MCF 10A (cell line): ENCODE measurements at regions of chr6 and their contacts with region 1.

Region 1: GRCh38 chr6:89080542-89081422 is at the start of gene PNRC1:
- DNase-seq: peak; percentile 99
- H3K4me3 Mint-ChIP-seq: peak within 1 kb of the TSS; percentile 96
- H3K27ac Mint-ChIP-seq: peak within 1 kb of the TSS; percentile 92
- H3K4me1 Mint-ChIP-seq: peaks cover 19% of the 10 kb centered on the region
- H3K27me3 Mint-ChIP-seq: no peaks in the 10 kb centered on the region
- CTCF ChIP-seq: no peak
- total RNA-seq, gene PNRC1: 158 and 183 TPM in 2 replicates

Region 2: DNA sequence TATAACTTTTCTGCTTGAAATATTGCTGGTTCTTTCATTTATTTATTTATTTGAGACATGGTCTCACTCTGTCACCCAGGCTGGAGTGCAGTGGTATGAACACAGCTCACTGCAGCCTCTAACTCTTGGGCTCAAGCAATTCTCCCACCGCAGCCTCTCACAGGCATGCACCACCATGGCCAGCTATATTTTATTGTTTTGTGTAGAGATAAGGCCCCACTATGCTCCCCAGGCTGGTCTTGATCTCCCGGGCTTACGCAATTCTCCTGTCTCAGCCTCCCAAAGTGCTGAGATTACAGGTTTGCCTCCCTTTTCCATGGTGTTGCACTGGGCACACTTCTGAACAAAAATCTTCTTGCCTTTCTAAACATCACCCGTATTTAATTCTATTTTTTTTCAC is 78.3 kb before region 1 on chr6:
- CTCF ChIA-PET with region 1: no interaction called
- POLR2A ChIA-PET with region 1: interaction called, 10 read pairs
- intact Hi-C with region 1: no loop called
- DNase-seq: no peak
- H3K4me3 Mint-ChIP-seq: no peak overlapping the region
- H3K27ac Mint-ChIP-seq: no peak overlapping the region
- H3K4me1 Mint-ChIP-seq: peaks cover 3% of the 10 kb centered on the region
- H3K27me3 Mint-ChIP-seq: no peaks in the 10 kb centered on the region
- CTCF ChIP-seq: no peak

Region 3: GRCh38 chr6:89022798-89023197 is 58.0 kb before region 1 on chr6:
- CTCF ChIA-PET with region 1: interaction called, 4 read pairs
- POLR2A ChIA-PET with region 1: interaction called, 36 read pairs
- intact Hi-C with region 1: no loop called
- DNase-seq: peak; percentile 40
- H3K4me3 Mint-ChIP-seq: no peak overlapping the region
- H3K27ac Mint-ChIP-seq: no peak overlapping the region
- H3K4me1 Mint-ChIP-seq: peaks cover 24% of the 10 kb centered on the region
- H3K27me3 Mint-ChIP-seq: no peaks in the 10 kb centered on the region
- CTCF ChIP-seq: no peak

Region 4: DNA sequence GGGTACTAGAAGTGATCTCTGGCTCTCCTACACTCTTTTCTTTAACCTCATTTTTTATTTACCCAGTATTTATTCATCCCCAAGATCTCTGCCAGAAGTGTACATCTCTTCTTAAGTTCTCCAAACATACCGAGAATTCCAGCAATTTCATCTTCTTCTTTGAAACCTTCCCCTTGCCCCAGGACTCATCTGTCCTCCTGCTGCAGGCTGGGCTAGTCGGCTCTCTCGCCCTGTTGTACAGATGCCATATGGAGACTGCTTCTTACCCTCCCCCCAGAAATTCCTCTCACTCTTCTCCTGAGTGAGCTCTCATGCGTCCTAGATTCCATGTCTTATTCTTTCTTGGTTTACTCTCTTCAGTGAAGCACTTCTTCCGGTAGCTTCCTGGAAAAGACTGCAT is 22.2 kb before region 1 on chr6:
- CTCF ChIA-PET with region 1: interaction called, 11 read pairs
- POLR2A ChIA-PET with region 1: interaction called, 177 read pairs
- intact Hi-C with region 1: no loop called
- DNase-seq: no peak
- H3K4me3 Mint-ChIP-seq: no peak overlapping the region
- H3K27ac Mint-ChIP-seq: no peak overlapping the region
- H3K4me1 Mint-ChIP-seq: peaks cover 5% of the 10 kb centered on the region
- H3K27me3 Mint-ChIP-seq: no peaks in the 10 kb centered on the region
- CTCF ChIP-seq: no peak

Region 5: DNA sequence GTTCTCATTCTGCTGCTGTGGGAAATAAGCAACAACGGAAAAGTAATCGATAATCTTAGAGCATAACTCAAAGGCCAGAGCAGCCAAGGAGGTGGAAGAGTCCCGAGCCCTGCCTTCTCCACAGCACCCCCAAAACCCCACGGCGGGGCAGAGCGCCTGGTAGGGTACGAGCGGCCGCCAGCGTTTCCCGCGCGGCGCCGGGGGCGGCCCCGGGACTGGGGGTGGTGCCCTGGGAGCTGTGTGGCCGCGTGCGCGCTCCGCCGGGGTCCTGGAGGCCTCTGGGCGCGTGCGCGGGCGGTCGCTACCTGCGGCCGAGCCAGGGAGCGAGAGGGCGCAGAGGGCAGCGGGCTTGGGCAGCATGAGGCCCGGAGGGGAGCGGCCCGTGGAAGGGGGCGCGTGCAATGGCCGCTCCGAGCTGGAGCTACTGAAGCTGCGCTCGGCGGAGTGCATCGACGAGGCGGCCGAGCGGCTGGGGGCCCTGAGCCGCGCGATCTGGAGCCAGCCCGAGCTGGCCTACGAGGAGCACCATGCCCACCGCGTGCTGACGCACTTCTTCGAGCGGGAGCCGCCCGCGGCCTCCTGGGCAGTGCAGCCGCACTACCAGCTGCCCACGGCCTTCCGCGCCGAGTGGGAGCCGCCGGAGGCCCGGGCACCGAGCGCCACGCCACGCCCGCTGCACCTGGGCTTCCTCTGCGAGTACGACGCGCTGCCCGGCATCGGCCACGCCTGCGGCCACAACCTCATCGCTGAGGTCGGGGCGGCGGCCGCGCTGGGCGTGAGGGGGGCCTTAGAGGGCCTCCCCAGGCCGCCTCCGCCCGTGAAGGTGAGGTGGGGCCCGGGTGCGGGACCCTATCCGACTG is 65.2 kb after region 1 on chr6 and contains the start of gene PM20D2:
- CTCF ChIA-PET with region 1: interaction called, 3 read pairs
- POLR2A ChIA-PET with region 1: interaction called, 110 read pairs
- intact Hi-C with region 1: loop called (anchors 5 kb)
- DNase-seq: peak; percentile 69
- H3K4me3 Mint-ChIP-seq: peak within 1 kb of the TSS; percentile 80
- H3K27ac Mint-ChIP-seq: peak within 1 kb of the TSS; percentile 87
- H3K4me1 Mint-ChIP-seq: peaks cover 22% of the 10 kb centered on the region
- H3K27me3 Mint-ChIP-seq: no peaks in the 10 kb centered on the region
- CTCF ChIP-seq: no peak
- total RNA-seq, gene PM20D2: 9.9 and 11.9 TPM in 2 replicates